Posterior vena cava (tissue), 2 donors: ENCODE measurements at regions of chr19 and their contacts with region 1.

Region 1: DNA sequence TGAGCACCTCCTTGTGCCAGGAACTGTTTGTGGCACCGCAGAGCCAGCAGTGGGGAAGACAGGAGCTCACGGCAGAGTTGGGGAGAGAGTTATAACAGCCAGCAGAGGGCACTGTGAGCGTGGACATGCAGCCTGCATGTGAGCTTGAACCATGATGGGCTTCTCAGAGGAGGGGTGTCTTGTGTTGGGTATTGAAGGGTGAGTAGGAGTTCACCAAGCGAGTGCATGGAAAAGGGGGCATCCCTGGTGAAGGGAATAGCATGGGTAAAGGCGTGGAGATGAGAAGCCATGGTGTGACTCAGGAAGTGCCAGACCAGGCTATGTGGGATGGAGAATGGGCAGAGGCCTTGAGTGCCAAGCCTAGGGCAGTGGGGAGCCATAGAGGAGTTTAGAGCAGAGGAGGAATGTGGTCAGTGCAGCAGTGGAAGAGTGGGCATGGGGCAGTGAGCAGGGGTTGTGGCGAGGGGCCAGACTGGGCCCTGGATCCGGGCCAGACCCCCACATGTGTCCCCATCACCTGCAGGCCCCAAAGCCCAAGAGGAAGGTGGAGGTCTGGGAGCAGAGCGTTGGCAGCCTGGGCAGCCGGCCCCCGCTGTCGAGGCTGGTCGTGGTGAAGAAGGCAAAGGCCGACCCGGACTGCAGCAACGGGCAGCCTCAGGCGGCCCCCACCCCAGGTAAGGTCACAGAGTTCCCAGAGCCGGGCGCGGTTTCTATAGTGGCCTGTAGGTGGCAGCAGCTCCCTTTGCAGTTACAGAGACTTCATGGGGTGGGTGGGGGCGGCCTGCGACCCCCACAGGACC is 11.8 kb upstream of the SHD start:
- DNase-seq: peak; percentile 85

Region 2: GRCh38 chr19:4524808-4525562 is 257.7 kb after region 1 on chr19:
- intact Hi-C with region 1: loop called (anchors 5 to 10 kb)
- DNase-seq: no peak